Cardiac septum (tissue), 1 donor: ENCODE measurements at regions of chr2 and their contacts with region 1.

Region 1: GRCh38 chr2:2846332-2847208 is 515.5 kb upstream of the MYT1L start:
- DNase-seq: no peak

Region 2: DNA sequence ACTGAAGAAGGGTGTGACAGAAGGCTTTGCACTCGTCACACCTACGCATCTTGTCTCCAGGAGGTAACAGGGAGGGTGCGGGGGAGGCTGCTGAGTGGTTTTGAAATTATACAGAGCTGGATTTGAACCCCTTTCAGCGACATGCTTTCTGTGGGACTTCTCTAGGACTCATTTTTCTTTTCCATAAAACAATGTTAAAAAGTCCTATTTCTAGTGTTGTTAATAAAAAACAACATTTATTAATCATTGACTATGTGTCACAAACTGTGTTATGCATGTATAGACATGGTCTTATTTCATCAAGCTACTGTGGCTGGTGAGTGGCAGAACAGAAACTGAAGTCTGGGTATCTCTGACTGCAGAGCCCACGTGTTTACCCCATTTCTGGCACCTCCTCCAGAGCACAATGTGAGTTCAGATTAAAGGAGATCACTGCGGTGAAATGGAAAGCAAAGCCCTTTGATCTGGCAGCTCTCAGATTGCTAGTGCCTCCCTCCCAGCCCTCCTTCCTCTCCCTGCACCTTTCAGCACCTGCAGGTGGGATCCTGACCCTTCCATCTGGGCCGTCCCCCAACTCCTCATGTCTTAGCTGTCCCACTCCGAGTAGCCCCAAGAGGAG is 200.0 kb before region 1 on chr2:
- intact Hi-C with region 1: loop called (anchors 10 kb)
- DNase-seq: no peak

Region 3: DNA sequence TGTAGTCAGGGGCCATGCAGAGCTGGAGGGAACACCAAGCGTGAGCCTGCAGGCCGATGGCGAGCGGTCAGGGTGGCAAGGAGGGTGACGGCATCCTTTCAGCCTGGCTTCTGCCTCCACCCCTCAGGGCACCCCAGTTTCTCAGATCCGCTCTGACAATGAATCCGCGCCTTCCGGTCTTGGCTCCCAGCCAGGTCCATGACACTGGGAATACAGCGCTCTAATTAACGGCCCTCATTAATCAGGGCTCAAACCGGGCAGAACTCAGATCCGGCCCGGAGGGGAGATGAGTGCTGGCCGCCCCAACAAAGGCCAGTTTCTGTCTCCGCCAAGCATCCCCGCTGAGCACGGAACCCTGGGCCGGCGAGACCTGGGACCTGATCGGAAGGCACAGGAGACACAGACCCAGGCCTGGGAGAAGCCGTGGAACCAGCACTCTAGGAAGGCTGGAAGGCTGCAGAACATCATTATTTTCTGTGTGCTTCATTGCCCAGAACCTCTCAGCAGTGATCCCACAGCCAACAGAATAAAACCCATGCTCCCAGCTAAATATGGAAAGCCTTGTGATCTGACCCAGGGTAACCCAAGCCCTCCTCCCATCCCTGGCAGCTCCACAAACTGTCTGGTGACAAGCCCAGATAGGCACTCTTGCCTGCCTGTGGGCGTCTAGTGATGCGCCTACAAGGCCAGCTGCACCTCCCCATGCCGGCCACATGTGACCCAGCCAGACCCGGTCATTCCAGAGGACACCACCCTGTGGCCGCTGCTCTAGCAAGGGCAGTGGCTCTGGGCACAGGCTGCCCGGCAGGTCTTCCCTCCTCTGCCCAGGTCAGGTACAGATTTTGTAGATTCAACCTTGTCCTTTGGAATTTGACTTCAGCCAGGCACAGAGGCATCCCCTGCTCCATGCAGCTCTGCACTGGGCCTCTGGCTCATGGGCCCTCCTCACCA is 76.8 kb before region 1 on chr2:
- intact Hi-C with region 1: loop called (anchors 1 kb)
- DNase-seq: peak; percentile 90

Region 4: GRCh38 chr2:3303583-3304406 is 457.2 kb after region 1 on chr2:
- intact Hi-C with region 1: loop called (anchors 10 kb)
- DNase-seq: peak; percentile 94